Heart right ventricle (tissue), 16 donors: ENCODE measurements at regions of chr6 and their contacts with region 1.

Region 1: DNA sequence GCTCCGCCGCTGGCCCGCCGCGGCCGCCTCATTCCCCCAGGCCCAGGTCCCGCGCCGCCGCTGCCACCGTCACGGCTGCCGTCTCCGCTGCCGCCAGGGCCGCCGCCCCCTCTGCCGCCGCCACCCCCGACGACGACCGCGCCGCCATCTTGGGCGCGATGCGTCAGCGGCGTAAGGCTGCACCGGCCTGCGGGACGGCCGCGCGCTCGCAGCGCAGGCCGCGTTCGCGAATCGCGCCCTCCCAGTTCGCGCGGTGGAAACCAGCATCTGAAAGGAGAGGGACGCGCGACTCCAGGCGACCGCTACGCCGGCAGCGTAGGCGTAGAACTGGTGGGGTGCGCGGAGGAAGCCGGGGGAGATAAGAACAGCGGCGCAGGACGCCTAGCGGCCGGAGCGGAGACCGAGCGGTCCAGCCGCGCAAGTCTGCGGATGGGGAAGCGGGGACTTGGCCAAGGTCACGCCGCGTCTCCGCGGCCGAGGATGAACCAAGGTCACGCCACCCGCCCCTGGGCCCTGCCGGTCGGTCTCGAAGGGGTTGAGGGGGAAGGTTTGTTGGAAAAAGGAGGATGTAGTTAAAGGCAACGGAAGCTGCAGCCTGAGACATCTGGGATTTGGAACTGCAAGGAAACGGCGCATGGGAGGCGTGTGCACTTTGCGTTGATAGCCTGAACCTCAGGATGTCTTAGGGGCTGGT is at the start of gene NUDT3:
- DNase-seq: peak; percentile 94 to 96
- ATAC-seq: peak; percentile 92 to 96 (median 95)
- H3K4me3 ChIP-seq: peak within 1 kb of the TSS; percentile 70 to 95 (median 88)
- H3K27ac ChIP-seq: peak within 1 kb of the TSS; percentile 88 to 99 (median 98)
- H3K4me1 ChIP-seq: peaks cover 13 to 54% (median 42%) of the 10 kb centered on the region in 9 donors
- H3K27me3 ChIP-seq: no peaks in the 10 kb centered on the region
- CTCF ChIP-seq: peak; percentile 66 to 97 (median 87)
- total RNA-seq, gene NUDT3: 41.9 to 67.1 (median 59.0) TPM

Region 2: DNA sequence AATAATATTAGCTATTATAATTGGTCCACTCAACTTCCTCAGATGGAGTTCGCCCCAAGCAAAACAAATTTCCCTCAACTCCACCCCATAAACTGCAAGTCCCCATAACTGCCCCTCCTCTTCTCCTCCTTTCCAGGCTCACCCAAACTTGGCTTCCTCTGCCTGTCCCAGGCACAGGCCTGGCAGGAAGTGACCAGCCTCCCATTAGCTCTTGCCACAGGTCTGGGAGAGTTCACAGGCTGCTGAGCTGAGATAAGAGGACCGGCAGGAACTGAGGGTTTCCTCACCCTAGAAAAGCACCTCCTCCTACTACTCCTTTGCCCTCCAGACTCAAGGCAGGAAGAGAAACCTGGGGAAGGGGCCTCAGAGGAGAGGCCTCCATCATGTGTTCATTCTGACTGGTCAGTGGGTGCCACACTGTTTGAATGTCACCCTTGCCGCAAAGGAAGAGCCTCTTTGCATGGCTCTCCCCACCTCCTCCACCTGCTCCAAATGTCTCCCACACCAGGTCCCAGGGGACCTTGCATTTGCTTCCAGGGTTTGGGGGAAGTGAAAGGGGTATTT is 119.3 kb before region 1 on chr6:
- intact Hi-C with region 1: loop called in 3 of 10 experiments (anchors 5 to 10 kb)
- DNase-seq: peak; percentile 55 to 73
- ATAC-seq: peak; percentile 69 to 93 (median 90)
- H3K4me3 ChIP-seq: no peak overlapping the region
- H3K27ac ChIP-seq: peak overlapping the region in 9 of 10 donors; percentile 7 to 80 (median 70)
- H3K4me1 ChIP-seq: peaks cover 0 to 52% (median 38%) of the 10 kb centered on the region in 9 donors
- H3K27me3 ChIP-seq: no peaks in the 10 kb centered on the region
- CTCF ChIP-seq: no peak

Region 3: GRCh38 chr6:34301408-34301807 is 91.2 kb before region 1 on chr6:
- intact Hi-C with region 1: loop called in 1 of 10 experiments (anchors 10 kb)
- DNase-seq: peak; percentile 39 to 88
- ATAC-seq: peak; percentile 88 to 96 (median 92)
- H3K4me3 ChIP-seq: no peak overlapping the region
- H3K27ac ChIP-seq: peak overlapping the region; percentile 24 to 85 (median 55)
- H3K4me1 ChIP-seq: peaks cover 5 to 98% (median 76%) of the 10 kb centered on the region in 9 donors
- H3K27me3 ChIP-seq: no peaks in the 10 kb centered on the region
- CTCF ChIP-seq: no peak

Region 4: DNA sequence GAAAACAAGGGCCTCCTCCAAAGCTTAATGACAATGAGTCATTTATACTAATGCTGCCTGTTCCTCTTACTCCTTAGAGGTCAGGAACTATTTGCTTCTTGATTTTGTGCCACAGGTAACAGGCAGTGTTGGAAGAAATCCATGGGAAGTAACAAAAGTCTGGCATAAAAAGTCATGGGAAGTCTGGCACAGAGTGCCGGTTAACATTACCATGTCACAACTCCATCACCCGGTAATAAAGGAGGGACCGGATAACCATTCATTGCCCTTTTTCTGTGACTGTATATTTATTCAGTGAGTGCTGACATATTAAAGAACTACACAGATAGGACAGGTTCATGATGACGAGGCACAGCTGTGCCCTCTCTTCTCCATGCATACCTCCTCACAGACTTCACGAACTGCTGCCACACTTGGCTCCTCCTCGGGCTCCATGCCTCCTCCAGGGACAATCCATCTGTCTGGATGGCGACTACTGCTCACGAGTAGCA is 51.1 kb before region 1 on chr6:
- intact Hi-C with region 1: loop called in 2 of 10 experiments (anchors 5 kb)
- DNase-seq: no peak
- ATAC-seq: peak; percentile 31 to 77 (median 71)
- H3K4me3 ChIP-seq: no peak overlapping the region
- H3K27ac ChIP-seq: peak overlapping the region in 8 of 10 donors; percentile 21 to 69 (median 47)
- H3K4me1 ChIP-seq: peaks cover 16 to 98% (median 87%) of the 10 kb centered on the region in 9 donors
- H3K27me3 ChIP-seq: no peaks in the 10 kb centered on the region
- CTCF ChIP-seq: no peak